A549 (cell line): ENCODE measurements at regions of chr5 and their contacts with region 1.

Region 1: DNA sequence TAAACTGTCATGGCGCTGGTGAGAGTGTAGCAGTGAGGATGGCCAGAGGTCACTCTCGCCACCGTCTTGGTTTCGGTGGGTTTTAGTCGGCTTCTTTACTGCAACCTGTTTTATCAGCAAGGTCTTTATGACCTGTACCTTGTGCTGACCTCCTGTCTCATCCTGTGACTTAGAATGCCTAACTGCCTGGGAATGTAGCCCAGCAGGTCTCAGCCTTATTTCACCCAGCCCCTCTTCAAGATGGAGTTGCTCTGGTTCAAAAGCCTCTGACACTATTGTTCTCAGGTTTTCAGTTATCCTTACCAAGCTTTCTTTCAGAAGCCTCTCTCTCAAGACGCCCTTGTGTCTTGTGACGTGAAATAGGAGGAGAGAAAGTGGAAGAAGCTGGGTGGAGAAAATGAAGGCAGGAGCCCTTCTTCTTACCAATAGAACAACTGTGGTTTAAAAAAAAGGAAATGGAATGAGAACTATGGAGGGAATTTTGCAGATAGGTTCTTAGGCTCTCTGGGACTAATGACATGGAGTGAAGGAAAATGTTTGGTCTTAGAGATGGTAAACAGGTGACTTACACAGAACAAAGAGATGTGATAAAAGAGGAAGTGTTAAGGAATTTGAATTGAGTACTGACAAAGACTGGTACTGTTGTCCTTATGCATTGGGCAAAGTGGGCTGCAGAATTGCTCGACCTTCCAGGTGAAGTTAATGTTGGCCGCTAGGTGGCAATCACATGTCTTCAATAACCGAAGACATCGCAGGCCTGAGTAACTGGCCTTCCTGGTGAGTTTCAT is 133.3 kb upstream of the RAI14 start:
- DNase-seq: peak; percentile 80 to 86
- ATAC-seq: peak; percentile 94 to 96
- H3K4me3 ChIP-seq: no peak overlapping the region
- H3K27ac ChIP-seq: peak overlapping the region; percentile 68 to 82
- H3K4me1 ChIP-seq: peaks cover 40% of the 10 kb centered on the region
- CTCF ChIP-seq: peak; percentile 85
- EP300 ChIP-seq: no peak
- POLR2A ChIP-seq: no peak
- RAD21 ChIP-seq: peak; percentile 95 to 97

Region 2: GRCh38 chr5:34043099-34043876 is 479.5 kb before region 1 on chr5 and contains the start of gene C1QTNF3:
- CTCF ChIA-PET with region 1: no interaction called
- POLR2A ChIA-PET with region 1: no interaction called
- DNase-seq: no peak
- ATAC-seq: no peak
- H3K4me3 ChIP-seq: no peak within 1 kb of the TSS
- H3K27ac ChIP-seq: no peak within 1 kb of the TSS
- H3K4me1 ChIP-seq: peaks cover 8% of the 10 kb centered on the region; the same call in 2 of the 3 replicates
- CTCF ChIP-seq: no peak
- EP300 ChIP-seq: no peak
- POLR2A ChIP-seq: no peak
- RAD21 ChIP-seq: no peak
- polyA plus RNA-seq, gene C1QTNF3: 1.3 and 1.4 TPM in 2 replicates

Region 3: GRCh38 chr5:34486160-34486848 is 36.5 kb before region 1 on chr5:
- CTCF ChIA-PET with region 1: interaction called, 40 read pairs
- POLR2A ChIA-PET with region 1: no interaction called
- DNase-seq: peak; percentile 83 to 87
- ATAC-seq: peak; percentile 82 to 86
- H3K4me3 ChIP-seq: no peak overlapping the region
- H3K27ac ChIP-seq: peak overlapping the region; percentile 57 to 62; a peak in 5 of 6 replicates
- H3K4me1 ChIP-seq: peaks cover 28% of the 10 kb centered on the region
- CTCF ChIP-seq: peak; percentile 96
- EP300 ChIP-seq: no peak
- POLR2A ChIP-seq: no peak
- RAD21 ChIP-seq: peak; percentile 97

Region 4: GRCh38 chr5:34511915-34512314 is 10.9 kb before region 1 on chr5:
- CTCF ChIA-PET with region 1: interaction called, 26 read pairs
- POLR2A ChIA-PET with region 1: no interaction called
- DNase-seq: no peak
- ATAC-seq: peak; percentile 47 to 80; a peak in 3 of 6 replicates
- H3K4me3 ChIP-seq: no peak overlapping the region
- H3K27ac ChIP-seq: no peak overlapping the region
- H3K4me1 ChIP-seq: peaks cover 27% of the 10 kb centered on the region
- CTCF ChIP-seq: no peak
- EP300 ChIP-seq: no peak
- POLR2A ChIP-seq: no peak
- RAD21 ChIP-seq: no peak

Region 5: GRCh38 chr5:34587355-34588241 is 64.8 kb after region 1 on chr5:
- CTCF ChIA-PET with region 1: interaction called, 49 read pairs
- POLR2A ChIA-PET with region 1: interaction called, 11 read pairs
- DNase-seq: peak; percentile 60 to 80
- ATAC-seq: peak in 1 of 2 experiments; percentile 19; a peak in 3 of 6 replicates
- H3K4me3 ChIP-seq: peak overlapping the region; percentile 22; the same call in 2 of the 3 replicates
- H3K27ac ChIP-seq: peak overlapping the region; percentile 97 to 98
- H3K4me1 ChIP-seq: peaks cover 56% of the 10 kb centered on the region
- CTCF ChIP-seq: no peak
- EP300 ChIP-seq: peak; percentile 40 to 50; a peak in 2 of 5 replicates
- POLR2A ChIP-seq: no peak
- RAD21 ChIP-seq: no peak; a peak in 1 of 5 replicates

Region 6: GRCh38 chr5:34656001-34656699 is 133.4 kb after region 1 on chr5 and contains the start of gene RAI14:
- CTCF ChIA-PET with region 1: interaction called, 22 read pairs
- POLR2A ChIA-PET with region 1: no interaction called
- DNase-seq: peak; percentile 81 to 89
- ATAC-seq: peak; percentile 84 to 89
- H3K4me3 ChIP-seq: peak within 1 kb of the TSS; percentile 85
- H3K27ac ChIP-seq: peak within 1 kb of the TSS; percentile 95 to 98
- H3K4me1 ChIP-seq: peaks cover 49% of the 10 kb centered on the region
- CTCF ChIP-seq: peak; percentile 23
- EP300 ChIP-seq: no peak
- POLR2A ChIP-seq: peak; percentile 50
- RAD21 ChIP-seq: peak; percentile 10 to 59; a peak in 4 of 5 replicates
- polyA plus RNA-seq, gene RAI14: 97.7 and 113 TPM in 2 replicates